ENCODE measurements at regions of chr1 and their contacts with region 1.

Region 1: GRCh38 chr1:107277022-107277421 is 136.2 kb downstream of the NTNG1 start:
- DNase-seq: peak; percentile 3
- H3K4me3 ChIP-seq: no peak overlapping the region
- H3K27ac ChIP-seq: no peak overlapping the region
- H3K27me3 ChIP-seq: no peaks in the 10 kb centered on the region
- CTCF ChIP-seq: peak; percentile 60

Region 2: GRCh38 chr1:107198561-107198960 is 78.5 kb before region 1 on chr1:
- CTCF ChIA-PET with region 1: no interaction called
- POLR2A ChIA-PET with region 1: no interaction called
- DNase-seq: no peak
- H3K4me3 ChIP-seq: no peak overlapping the region
- H3K27ac ChIP-seq: no peak overlapping the region
- H3K27me3 ChIP-seq: no peaks in the 10 kb centered on the region
- CTCF ChIP-seq: no peak

Region 3: GRCh38 chr1:107529502-107530149 is 252.6 kb after region 1 on chr1:
- CTCF ChIA-PET with region 1: interaction called, 14 read pairs
- POLR2A ChIA-PET with region 1: no interaction called
- DNase-seq: no peak
- H3K4me3 ChIP-seq: no peak overlapping the region
- H3K27ac ChIP-seq: no peak overlapping the region
- H3K27me3 ChIP-seq: no peaks in the 10 kb centered on the region
- CTCF ChIP-seq: peak; percentile 72

Region 4: GRCh38 chr1:107704911-107705310 is 427.9 kb after region 1 on chr1:
- CTCF ChIA-PET with region 1: no interaction called
- POLR2A ChIA-PET with region 1: no interaction called
- DNase-seq: no peak
- H3K4me3 ChIP-seq: no peak overlapping the region
- H3K27ac ChIP-seq: no peak overlapping the region
- H3K27me3 ChIP-seq: no peaks in the 10 kb centered on the region
- CTCF ChIP-seq: no peak